ENCODE measurements at regions of chr10 and their contacts with region 1.

Region 1: GRCh38 chr10:6068422-6068821 is 6.3 kb upstream of the IL2RA start:
- DNase-seq: no peak
- ATAC-seq: peak; percentile 76
- H3K4me3 ChIP-seq: no peak overlapping the region
- H3K27ac ChIP-seq: peak overlapping the region; percentile 3
- H3K4me1 ChIP-seq: peaks cover 53% of the 10 kb centered on the region
- H3K27me3 ChIP-seq: no peaks in the 10 kb centered on the region
- CTCF ChIP-seq: no peak

Region 2: DNA sequence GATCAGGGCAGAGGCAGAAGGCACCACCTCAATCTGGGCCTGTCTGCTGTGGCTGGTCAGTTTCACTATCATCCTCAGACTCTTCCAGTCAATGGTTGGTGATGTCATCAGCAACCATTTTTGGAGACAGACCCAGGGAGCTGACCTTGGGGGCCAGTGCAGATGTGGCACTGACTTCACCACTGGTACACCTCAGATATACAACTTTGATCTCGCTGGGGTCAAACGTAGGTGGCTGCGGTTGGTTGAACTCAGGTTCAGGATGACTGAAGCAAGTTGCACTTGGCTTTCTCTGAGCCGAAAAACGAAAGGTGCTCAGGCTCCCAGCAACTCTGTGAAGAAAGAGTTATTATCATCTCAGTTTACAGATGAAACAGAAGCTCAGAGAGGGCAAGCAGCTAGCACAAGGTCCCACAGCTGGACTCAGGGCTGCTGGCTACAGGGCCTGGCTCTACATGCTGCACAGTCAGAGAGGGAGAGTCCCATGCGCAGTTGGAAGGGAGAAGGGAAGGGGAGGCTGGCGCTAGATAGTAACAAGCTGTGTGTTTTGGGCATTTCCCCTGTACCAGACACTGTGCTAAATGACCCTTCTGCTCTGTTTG is 206.0 kb before region 1 on chr10:
- intact Hi-C with region 1: no loop called
- DNase-seq: no peak
- ATAC-seq: no peak
- H3K4me3 ChIP-seq: no peak overlapping the region
- H3K27ac ChIP-seq: no peak overlapping the region
- H3K4me1 ChIP-seq: no peaks in the 10 kb centered on the region
- H3K27me3 ChIP-seq: no peaks in the 10 kb centered on the region
- CTCF ChIP-seq: no peak

Region 3: GRCh38 chr10:5987747-5988146 is 80.7 kb before region 1 on chr10:
- intact Hi-C with region 1: no loop called
- DNase-seq: no peak
- ATAC-seq: peak; percentile 38
- H3K4me3 ChIP-seq: no peak overlapping the region
- H3K27ac ChIP-seq: peak overlapping the region; percentile 32
- H3K4me1 ChIP-seq: no peaks in the 10 kb centered on the region
- H3K27me3 ChIP-seq: no peaks in the 10 kb centered on the region
- CTCF ChIP-seq: no peak

Region 4: GRCh38 chr10:6014241-6014761 is 54.1 kb before region 1 on chr10:
- intact Hi-C with region 1: loop called (anchors 10 kb)
- DNase-seq: no peak
- ATAC-seq: peak; percentile 83
- H3K4me3 ChIP-seq: no peak overlapping the region
- H3K27ac ChIP-seq: peak overlapping the region; percentile 18
- H3K4me1 ChIP-seq: peaks cover 21% of the 10 kb centered on the region
- H3K27me3 ChIP-seq: no peaks in the 10 kb centered on the region
- CTCF ChIP-seq: peak; percentile 81